ENCODE measurements at regions of chr11 and their contacts with region 1.

Region 1: DNA sequence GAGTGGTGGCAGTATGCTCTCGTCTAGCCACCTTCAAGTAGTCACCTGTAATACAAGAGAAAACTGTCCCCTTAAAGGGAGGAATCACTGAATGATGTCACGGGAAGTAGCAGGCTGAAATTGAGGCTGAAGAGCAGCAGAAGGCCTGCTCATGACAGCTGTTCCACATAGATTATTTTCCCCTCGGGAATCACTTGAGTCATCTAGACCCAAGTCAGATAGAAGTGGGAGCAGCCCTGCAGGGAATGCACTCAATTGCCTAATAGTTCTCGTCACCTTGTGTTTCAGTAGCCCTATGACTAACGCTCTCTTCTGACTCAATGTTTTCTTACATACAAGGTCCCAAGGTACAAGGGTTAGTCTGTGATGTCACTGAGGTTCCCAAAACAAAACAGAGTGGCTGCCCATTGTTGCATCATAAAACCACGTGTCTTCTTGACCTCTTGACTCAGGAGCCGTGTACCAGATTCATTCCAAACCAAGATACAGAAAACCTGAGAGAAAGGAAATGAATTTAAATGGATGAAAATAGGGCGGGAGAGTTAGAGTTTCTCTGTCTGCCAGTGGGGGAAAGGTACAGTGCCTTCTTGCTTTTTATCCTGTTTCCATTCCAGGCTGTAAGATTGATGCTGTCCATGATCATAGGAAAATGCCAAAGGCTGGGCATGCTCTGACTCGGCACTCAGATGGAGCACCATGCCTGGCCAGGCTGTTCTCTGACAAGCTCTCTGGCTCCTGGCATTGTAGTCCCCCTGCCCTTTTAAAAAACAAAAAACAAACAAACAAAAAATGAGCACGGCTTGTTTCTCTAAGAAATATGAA is 21.6 kb upstream of the C11orf96 start:
- DNase-seq: no peak
- H3K4me3 ChIP-seq: no peak overlapping the region
- H3K27ac ChIP-seq: peak overlapping the region; percentile 65 to 100
- H3K4me1 ChIP-seq: peaks cover 4 to 84% of the 10 kb centered on the region in 2 experiments; a peak in 3 of 4 replicates
- H3K27me3 ChIP-seq: no peaks in the 10 kb centered on the region
- CTCF ChIP-seq: no peak
- EP300 ChIP-seq: no peak
- RAD21 ChIP-seq: no peak

Region 2: DNA sequence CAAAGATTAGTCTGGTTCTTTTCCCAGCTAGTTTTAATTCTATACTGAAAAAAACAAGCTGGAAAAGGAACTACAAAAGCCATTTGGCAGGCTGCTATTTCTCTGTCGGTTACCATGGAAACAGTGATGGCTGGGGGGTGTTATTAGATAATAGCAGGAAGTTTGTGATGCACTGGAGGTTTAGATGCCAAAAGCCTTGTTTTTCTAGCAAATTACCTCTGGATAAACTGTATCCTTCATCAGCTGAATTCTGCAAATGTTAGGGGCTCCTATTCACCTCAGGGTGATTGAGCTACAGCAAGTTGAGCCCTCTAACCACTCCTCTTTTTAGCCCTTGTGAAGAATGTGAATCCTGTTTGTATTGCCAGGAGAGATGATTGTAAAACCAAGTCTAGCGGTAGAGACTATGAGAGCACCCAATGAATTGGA is 15.0 kb before region 1 on chr11:
- CTCF ChIA-PET with region 1: interaction called, 85 read pairs
- POLR2A ChIA-PET with region 1: interaction called, 42 read pairs
- DNase-seq: peak; percentile 73
- H3K4me3 ChIP-seq: no peak overlapping the region
- H3K27ac ChIP-seq: peak overlapping the region; percentile 51 to 100
- H3K4me1 ChIP-seq: peaks cover 0 to 50% of the 10 kb centered on the region in 2 experiments; a peak in 2 of 4 replicates
- H3K27me3 ChIP-seq: no peaks in the 10 kb centered on the region
- CTCF ChIP-seq: no peak
- EP300 ChIP-seq: peak in 1 of 2 experiments; percentile 96; a peak in 2 of 4 replicates
- RAD21 ChIP-seq: peak; percentile 14; the same call in 1 of the 2 replicates